ENCODE measurements at regions of chr5 and their contacts with region 1.

Region 1: GRCh38 chr5:42691413-42691937 is 65.1 kb upstream of the CCDC152 start:
- DNase-seq: no peak
- ATAC-seq: peak; percentile 98

Region 2: GRCh38 chr5:42600431-42600830 is 91.0 kb before region 1 on chr5:
- intact Hi-C with region 1: loop called (anchors 5 kb)
- DNase-seq: no peak
- ATAC-seq: no peak

Region 3: DNA sequence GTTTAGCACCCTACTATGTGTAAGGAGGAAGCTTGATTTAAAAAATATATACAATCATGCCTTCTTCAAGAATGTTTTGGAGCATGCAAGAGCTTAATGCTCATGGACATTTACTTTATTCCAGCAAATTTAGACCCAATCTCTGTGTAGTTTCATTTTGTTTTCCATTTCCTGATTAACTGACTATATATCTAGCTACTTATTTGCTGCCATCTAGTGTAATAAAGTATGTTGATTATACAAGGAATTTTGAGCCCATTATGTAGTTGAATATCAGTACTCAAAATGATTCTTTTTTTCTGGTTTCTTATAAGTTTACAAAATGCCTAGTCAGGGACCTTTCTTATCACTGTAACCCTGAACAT is 34.8 kb before region 1 on chr5:
- intact Hi-C with region 1: no loop called
- DNase-seq: no peak
- ATAC-seq: peak; percentile 50

Region 4: GRCh38 chr5:42950440-42951292 is 259.2 kb after region 1 on chr5:
- intact Hi-C with region 1: no loop called
- DNase-seq: peak; percentile 73
- ATAC-seq: peak; percentile 77